Natural killer cell (primary cell): ENCODE measurements at regions of chr10 and their contacts with region 1.

Region 1: GRCh38 chr10:96129387-96130325 is at the start of gene ZNF518A:
- DNase-seq: peak; percentile 88 to 97
- ATAC-seq: peak; percentile 85 to 91 (median 85)
- H3K4me3 ChIP-seq: peak within 1 kb of the TSS; percentile 60
- H3K4me3 Mint-ChIP-seq: peak within 1 kb of the TSS; percentile 98
- H3K27ac ChIP-seq: peak within 1 kb of the TSS; percentile 90
- H3K27ac Mint-ChIP-seq: peak within 1 kb of the TSS; percentile 97 to 98
- H3K4me1 ChIP-seq: peaks cover 10% of the 10 kb centered on the region
- H3K4me1 Mint-ChIP-seq: peaks cover 27 to 29% of the 10 kb centered on the region in 2 donors
- H3K27me3 ChIP-seq: peaks cover 30% of the 10 kb centered on the region
- H3K27me3 Mint-ChIP-seq: peaks cover 30 to 36% of the 10 kb centered on the region in 2 donors
- CTCF ChIP-seq: no peak
- total RNA-seq, gene ZNF518A: 17.6 to 34.7 (median 21.8) TPM

Region 2: DNA sequence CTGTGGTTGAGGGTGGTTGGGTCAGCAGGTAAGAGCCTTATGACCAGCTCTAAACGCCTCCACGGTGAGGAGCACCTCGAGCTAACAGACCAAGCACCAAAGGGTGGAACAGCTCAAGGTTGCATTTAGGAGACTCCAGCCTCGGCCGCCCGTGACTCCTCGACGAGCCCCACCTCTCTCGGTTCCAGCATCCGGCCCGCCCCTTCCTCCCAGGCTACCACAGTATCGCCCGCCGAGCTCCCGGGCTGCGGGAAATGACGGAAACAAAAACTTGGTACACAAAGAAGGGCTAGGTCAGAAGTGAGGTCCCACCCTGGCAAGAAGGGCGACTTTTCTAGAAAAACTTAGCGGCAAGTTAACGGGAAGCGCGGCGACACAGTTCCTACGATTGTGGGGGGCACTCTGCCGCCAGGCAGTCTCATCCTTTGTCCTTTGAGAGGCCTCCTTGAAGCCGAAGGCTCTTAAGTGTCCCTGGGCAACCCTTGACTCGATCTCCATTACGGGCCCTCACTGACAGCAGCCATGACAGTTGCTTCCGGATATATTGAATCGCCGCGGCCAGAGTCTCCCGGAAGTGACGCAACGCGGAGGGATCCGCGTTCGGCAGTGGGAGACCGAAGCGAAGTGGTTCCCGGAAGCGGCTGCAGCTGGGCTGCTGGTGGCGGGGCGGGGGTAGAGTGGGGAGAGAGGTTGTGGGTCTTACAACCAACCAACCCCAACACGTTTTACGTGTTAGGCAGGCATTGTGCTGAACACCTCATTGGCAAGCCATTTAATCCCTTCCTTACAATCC is 39.8 kb before region 1 on chr10:
- intact Hi-C with region 1: loop called (anchors 1 kb)
- DNase-seq: peak; percentile 93 to 98
- ATAC-seq: peak; percentile 92
- H3K4me3 ChIP-seq: peak overlapping the region; percentile 91
- H3K4me3 Mint-ChIP-seq: peak overlapping the region; percentile 93
- H3K27ac ChIP-seq: peak overlapping the region; percentile 97
- H3K27ac Mint-ChIP-seq: peak overlapping the region; percentile 96 to 98
- H3K4me1 ChIP-seq: peaks cover 12% of the 10 kb centered on the region
- H3K4me1 Mint-ChIP-seq: peaks cover 8 to 10% of the 10 kb centered on the region in 2 donors
- H3K27me3 ChIP-seq: peaks cover 16% of the 10 kb centered on the region
- H3K27me3 Mint-ChIP-seq: peaks cover 26 to 32% of the 10 kb centered on the region in 2 donors
- CTCF ChIP-seq: no peak

Region 3: DNA sequence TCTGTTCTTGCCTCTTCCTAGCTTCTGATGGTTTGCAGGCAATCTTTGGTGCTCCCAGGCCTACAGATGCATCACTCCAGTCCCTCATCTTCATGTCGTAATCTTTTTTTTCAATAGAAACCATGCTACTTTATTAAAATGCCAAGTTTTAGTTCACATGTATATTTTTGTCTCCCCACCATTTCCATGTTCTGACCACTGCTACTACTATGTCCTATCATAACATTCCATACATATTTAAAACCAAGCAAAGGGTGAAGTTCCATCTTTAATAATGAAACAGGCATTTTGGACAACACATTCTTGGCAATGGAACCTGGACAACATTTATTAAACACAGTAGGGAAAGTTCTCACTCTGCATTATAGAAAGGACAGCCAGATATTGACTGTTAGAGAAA is 59.3 kb after region 1 on chr10:
- intact Hi-C with region 1: no loop called
- DNase-seq: no peak
- ATAC-seq: no peak
- H3K4me3 ChIP-seq: no peak overlapping the region
- H3K4me3 Mint-ChIP-seq: no peak overlapping the region
- H3K27ac ChIP-seq: no peak overlapping the region
- H3K27ac Mint-ChIP-seq: no peak overlapping the region
- H3K4me1 ChIP-seq: no peaks in the 10 kb centered on the region
- H3K4me1 Mint-ChIP-seq: no peaks in the 10 kb centered on the region
- H3K27me3 ChIP-seq: no peaks in the 10 kb centered on the region
- H3K27me3 Mint-ChIP-seq: peaks cover 13 to 16% of the 10 kb centered on the region in 2 donors
- CTCF ChIP-seq: no peak